Adrenal gland (tissue), 19 donors: ENCODE measurements at regions of chr18 and their contacts with region 1.

Region 1: GRCh38 chr18:12236934-12237832 is 17.0 kb upstream of the CIDEA start:
- DNase-seq: peak; percentile 55 to 80 (median 68)
- H3K4me3 ChIP-seq: no peak overlapping the region
- H3K27ac ChIP-seq: no peak overlapping the region
- H3K4me1 ChIP-seq: no peaks in the 10 kb centered on the region
- H3K27me3 ChIP-seq: no peaks in the 10 kb centered on the region
- CTCF ChIP-seq: peak; percentile 60 to 92 (median 76)
- POLR2A ChIP-seq: no peak

Region 2: GRCh38 chr18:12092398-12093229 is 144.6 kb before region 1 on chr18:
- intact Hi-C with region 1: loop called in 1 of 2 experiments (anchors 10 kb)
- DNase-seq: no peak
- H3K4me3 ChIP-seq: no peak overlapping the region
- H3K27ac ChIP-seq: no peak overlapping the region
- H3K4me1 ChIP-seq: no peaks in the 10 kb centered on the region
- H3K27me3 ChIP-seq: no peaks in the 10 kb centered on the region
- CTCF ChIP-seq: no peak
- POLR2A ChIP-seq: no peak

Region 3: DNA sequence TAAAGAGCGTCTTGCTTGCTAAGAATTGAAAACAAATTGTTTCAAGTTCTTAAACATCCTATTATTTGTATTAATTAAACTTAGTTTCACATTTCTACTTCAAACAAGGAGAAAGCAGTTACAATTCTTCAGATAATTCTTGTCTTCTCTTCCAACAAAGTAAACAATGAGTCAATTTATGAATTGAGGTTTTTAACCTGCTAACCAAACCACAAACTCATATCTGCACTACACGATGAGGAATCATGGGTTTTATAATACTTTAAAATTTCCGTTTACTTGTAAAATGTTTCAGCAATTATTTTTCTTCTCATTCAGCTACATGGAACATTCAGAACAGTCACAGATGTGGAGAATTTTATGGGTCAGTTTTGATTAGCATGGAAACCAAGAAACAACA is 306.5 kb after region 1 on chr18:
- intact Hi-C with region 1: no loop called
- DNase-seq: no peak
- H3K4me3 ChIP-seq: no peak overlapping the region
- H3K27ac ChIP-seq: no peak overlapping the region
- H3K4me1 ChIP-seq: no peaks in the 10 kb centered on the region
- H3K27me3 ChIP-seq: no peaks in the 10 kb centered on the region
- CTCF ChIP-seq: no peak
- POLR2A ChIP-seq: no peak